Activated T-helper 2 cell treated with anti-CD3 and anti-CD28 coated beads, Interferon-gamma antibody, Interleukin-2, Interleukin-4, amounts not matched to agents 10 μg/mL and 5 μg/mL and 100 μg/mL, durations not matched to agents 14 hours and 24 hours and 36 hours (primary cell): ENCODE measurements at regions of chr18 and their contacts with region 1.

Region 1: GRCh38 chr18:36284671-36285295 is 12.7 kb upstream of the FHOD3 start:
- DNase-seq: no peak
- H3K4me3 Mint-ChIP-seq: no peak overlapping the region
- H3K27ac Mint-ChIP-seq: no peak overlapping the region
- H3K4me1 Mint-ChIP-seq: peaks cover 1% of the 10 kb centered on the region
- H3K27me3 Mint-ChIP-seq: peaks cover 9% of the 10 kb centered on the region

Region 2: DNA sequence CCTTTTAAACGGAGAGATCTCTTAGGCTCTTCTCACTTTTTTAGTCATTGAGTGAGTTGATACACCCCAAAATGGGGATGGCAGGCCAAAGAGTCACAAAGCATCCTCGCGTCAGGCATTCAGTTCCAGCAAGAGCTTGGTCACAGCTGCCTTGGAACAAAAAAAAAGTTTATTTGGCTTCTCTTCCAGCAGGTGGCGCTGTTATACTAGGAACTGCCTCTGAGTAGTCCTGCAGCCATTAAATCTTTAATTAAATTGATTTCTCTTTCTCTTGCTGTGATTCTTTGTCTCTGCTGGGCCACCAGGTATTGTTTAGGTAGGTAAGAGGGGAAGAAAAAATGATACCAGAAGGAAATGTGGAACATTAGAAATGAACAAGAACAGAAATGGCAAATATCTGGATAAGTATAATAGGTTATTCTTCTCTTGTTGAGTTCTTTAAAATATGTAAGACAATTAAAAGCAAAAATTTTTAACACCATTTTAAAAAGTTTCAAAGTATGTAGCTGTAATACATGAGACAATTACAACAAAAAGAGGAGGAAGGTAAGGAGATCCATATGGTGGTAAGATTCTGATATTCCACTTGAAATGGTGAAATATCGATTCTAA is 528.2 kb before region 1 on chr18:
- intact Hi-C with region 1: loop called (anchors 1 kb)
- DNase-seq: peak; percentile 25
- H3K4me3 Mint-ChIP-seq: no peak overlapping the region
- H3K27ac Mint-ChIP-seq: no peak overlapping the region
- H3K4me1 Mint-ChIP-seq: no peaks in the 10 kb centered on the region
- H3K27me3 Mint-ChIP-seq: peaks cover 14% of the 10 kb centered on the region

Region 3: GRCh38 chr18:36015629-36016028 is 269.2 kb before region 1 on chr18:
- intact Hi-C with region 1: loop called (anchors 1 kb)
- DNase-seq: no peak
- H3K4me3 Mint-ChIP-seq: no peak overlapping the region
- H3K27ac Mint-ChIP-seq: no peak overlapping the region
- H3K4me1 Mint-ChIP-seq: no peaks in the 10 kb centered on the region
- H3K27me3 Mint-ChIP-seq: no peaks in the 10 kb centered on the region

Region 4: GRCh38 chr18:36095936-36096519 is 188.8 kb before region 1 on chr18:
- intact Hi-C with region 1: loop called (anchors 1 kb)
- DNase-seq: no peak
- H3K4me3 Mint-ChIP-seq: no peak overlapping the region
- H3K27ac Mint-ChIP-seq: no peak overlapping the region
- H3K4me1 Mint-ChIP-seq: peaks cover 10% of the 10 kb centered on the region
- H3K27me3 Mint-ChIP-seq: peaks cover 24% of the 10 kb centered on the region

Region 5: GRCh38 chr18:36186911-36187834 is 97.6 kb before region 1 on chr18 and contains the start of gene MOCOS:
- intact Hi-C with region 1: loop called (anchors 10 kb)
- DNase-seq: peak; percentile 25
- H3K4me3 Mint-ChIP-seq: peak within 1 kb of the TSS; percentile 78
- H3K27ac Mint-ChIP-seq: no peak within 1 kb of the TSS
- H3K4me1 Mint-ChIP-seq: peaks cover 2% of the 10 kb centered on the region
- H3K27me3 Mint-ChIP-seq: peaks cover 35% of the 10 kb centered on the region
- total RNA-seq, gene MOCOS: 0.16 and 0.25 TPM in 2 replicates

Region 6: GRCh38 chr18:36197511-36198166 is 87.1 kb before region 1 on chr18:
- intact Hi-C with region 1: no loop called
- DNase-seq: no peak
- H3K4me3 Mint-ChIP-seq: no peak overlapping the region
- H3K27ac Mint-ChIP-seq: no peak overlapping the region
- H3K4me1 Mint-ChIP-seq: no peaks in the 10 kb centered on the region
- H3K27me3 Mint-ChIP-seq: peaks cover 2% of the 10 kb centered on the region

Region 7: GRCh38 chr18:36229188-36229587 is 55.6 kb before region 1 on chr18:
- intact Hi-C with region 1: loop called (anchors 10 kb)
- DNase-seq: no peak
- H3K4me3 Mint-ChIP-seq: no peak overlapping the region
- H3K27ac Mint-ChIP-seq: no peak overlapping the region
- H3K4me1 Mint-ChIP-seq: no peaks in the 10 kb centered on the region
- H3K27me3 Mint-ChIP-seq: no peaks in the 10 kb centered on the region

Region 8: DNA sequence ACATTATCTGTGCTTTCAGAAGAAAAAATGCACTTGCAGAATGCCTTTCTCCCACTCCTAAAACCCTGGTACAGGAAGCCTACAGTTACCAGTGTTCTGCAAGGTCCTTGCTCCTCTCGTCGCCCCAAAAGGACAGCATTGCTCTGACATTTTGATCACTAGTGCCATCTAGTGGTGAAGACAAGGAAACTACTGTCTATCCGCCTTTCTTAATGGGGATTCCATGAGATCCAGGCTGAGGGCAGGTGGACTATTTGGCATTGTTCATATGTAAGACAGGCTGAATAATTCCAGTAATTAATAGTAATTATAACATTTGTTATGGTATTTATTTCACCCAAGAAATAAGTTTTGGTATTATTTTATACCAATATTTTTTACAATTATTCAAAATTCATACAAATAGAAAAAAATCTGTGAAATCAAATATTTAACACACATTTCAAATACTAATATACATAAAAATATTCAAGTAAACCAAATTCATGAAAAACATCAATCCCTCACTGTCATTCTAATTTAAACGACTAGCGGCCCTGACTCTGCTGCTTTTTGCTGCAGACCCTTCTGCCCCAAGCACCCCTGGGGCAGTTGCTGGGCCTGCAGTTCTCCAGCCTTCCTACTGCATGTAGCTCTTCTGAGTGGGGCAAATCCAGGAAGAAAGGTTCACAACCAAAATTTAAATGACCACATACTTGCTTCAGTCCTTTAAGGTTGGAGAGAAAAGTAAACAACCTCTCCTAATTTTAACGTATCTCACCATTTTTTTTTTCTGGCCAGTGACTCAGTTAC is 525.0 kb after region 1 on chr18:
- intact Hi-C with region 1: loop called (anchors 5 kb)
- DNase-seq: peak; percentile 10
- H3K4me3 Mint-ChIP-seq: no peak overlapping the region
- H3K27ac Mint-ChIP-seq: no peak overlapping the region
- H3K4me1 Mint-ChIP-seq: peaks cover 4% of the 10 kb centered on the region
- H3K27me3 Mint-ChIP-seq: no peaks in the 10 kb centered on the region